ENCODE measurements at regions of chr9 and their contacts with region 1.

Region 1: GRCh38 chr9:115278326-115279035 is 160.5 kb upstream of the TNC start:
- DNase-seq: no peak
- CTCF ChIP-seq: no peak

Region 2: DNA sequence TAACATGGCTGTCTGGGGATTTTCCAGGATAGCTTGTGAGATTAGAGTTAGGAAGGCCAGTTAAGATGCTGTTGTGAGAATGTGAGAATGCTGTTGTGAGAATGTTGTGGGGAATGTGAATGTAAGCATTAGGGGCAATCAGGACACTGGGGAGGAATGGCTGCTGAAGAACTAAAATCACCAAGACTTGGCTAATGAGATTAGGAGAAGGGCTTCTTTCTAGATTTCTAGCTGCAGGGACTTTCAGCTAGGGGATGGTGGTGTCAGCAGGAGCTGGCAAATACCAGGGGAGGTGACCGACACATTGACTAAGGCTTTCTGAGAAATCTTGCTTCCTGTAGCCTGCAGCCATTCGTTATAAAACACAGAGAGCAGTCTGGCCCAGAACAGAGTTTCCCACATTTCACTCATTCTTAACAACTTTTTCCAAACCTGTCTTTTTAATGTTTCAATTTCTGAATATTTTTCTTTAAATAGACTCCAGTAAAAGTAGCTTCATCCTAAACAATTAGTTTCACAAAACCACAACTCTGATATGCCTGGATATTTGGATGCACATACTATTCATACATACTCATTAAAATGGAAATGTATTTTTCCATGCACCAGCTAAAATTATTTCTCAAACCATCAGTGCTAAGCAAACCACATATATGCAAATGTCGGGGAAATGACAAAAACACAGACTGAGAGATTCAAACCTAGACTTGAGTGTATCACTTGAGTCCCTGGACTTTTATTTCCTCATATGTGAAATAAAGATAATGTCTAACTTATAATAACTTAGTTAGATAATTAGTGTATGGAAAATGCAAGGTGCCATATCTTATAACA is 71.3 kb before region 1 on chr9:
- CTCF ChIA-PET with region 1: interaction called, 13 read pairs
- POLR2A ChIA-PET with region 1: no interaction called
- DNase-seq: no peak
- CTCF ChIP-seq: no peak